Esophagus muscularis mucosa (tissue), 4 donors: ENCODE measurements at regions of chr10 and their contacts with region 1.

Region 1: GRCh38 chr10:28179006-28179742 is 123.7 kb downstream of the MPP7 start:
- DNase-seq: no peak
- H3K4me3 ChIP-seq: peak overlapping the region in 2 of 4 donors; percentile 31 to 41
- H3K27ac ChIP-seq: peak overlapping the region in 3 of 4 donors; percentile 61 to 70 (median 68)
- H3K4me1 ChIP-seq: peaks cover 2 to 44% (median 37%) of the 10 kb centered on the region in 4 donors
- H3K27me3 ChIP-seq: no peaks in the 10 kb centered on the region
- CTCF ChIP-seq: peak; percentile 63 to 80 (median 74)
- EP300 ChIP-seq: no peak
- POLR2A ChIP-seq: no peak

Region 2: GRCh38 chr10:27558612-27559020 is 620.6 kb before region 1 on chr10:
- intact Hi-C with region 1: loop called (anchors 10 kb)
- DNase-seq: no peak
- H3K4me3 ChIP-seq: no peak overlapping the region
- H3K27ac ChIP-seq: no peak overlapping the region
- H3K4me1 ChIP-seq: peaks cover 0 to 6% (median 2%) of the 10 kb centered on the region in 4 donors
- H3K27me3 ChIP-seq: no peaks in the 10 kb centered on the region
- CTCF ChIP-seq: peak; percentile 66 to 79 (median 75)
- EP300 ChIP-seq: no peak
- POLR2A ChIP-seq: no peak

Region 3: GRCh38 chr10:28111712-28112111 is 67.5 kb before region 1 on chr10:
- intact Hi-C with region 1: loop called (anchors 10 kb)
- DNase-seq: no peak
- H3K4me3 ChIP-seq: no peak overlapping the region
- H3K27ac ChIP-seq: no peak overlapping the region
- H3K4me1 ChIP-seq: peaks cover 0 to 12% (median 3%) of the 10 kb centered on the region in 4 donors
- H3K27me3 ChIP-seq: peaks cover 0 to 4% (median 0%) of the 10 kb centered on the region in 4 donors
- CTCF ChIP-seq: no peak
- EP300 ChIP-seq: no peak
- POLR2A ChIP-seq: no peak

Region 4: DNA sequence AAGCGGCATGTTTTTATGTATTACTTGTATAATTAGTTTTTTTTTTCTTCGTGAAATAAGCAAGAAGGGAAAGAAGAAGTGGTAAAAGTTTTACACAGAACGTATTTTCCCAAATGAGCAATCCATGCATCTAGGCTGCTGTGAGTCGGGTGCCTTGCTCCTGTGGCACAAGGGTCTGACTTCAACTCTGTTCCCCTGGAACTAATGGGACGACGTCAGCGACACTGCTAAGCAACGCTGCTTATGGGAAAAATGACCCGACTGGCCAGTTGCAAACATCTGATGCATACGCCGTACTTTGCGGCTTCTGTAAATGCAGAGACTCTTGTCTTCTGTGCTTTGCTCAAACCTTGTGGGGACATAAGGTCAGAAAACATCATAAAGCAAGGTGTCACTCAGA is 57.4 kb after region 1 on chr10:
- intact Hi-C with region 1: loop called (anchors 10 kb)
- DNase-seq: no peak
- H3K4me3 ChIP-seq: no peak overlapping the region
- H3K27ac ChIP-seq: no peak overlapping the region
- H3K4me1 ChIP-seq: peaks cover 0 to 7% (median 6%) of the 10 kb centered on the region in 4 donors
- H3K27me3 ChIP-seq: no peaks in the 10 kb centered on the region
- CTCF ChIP-seq: no peak
- EP300 ChIP-seq: no peak
- POLR2A ChIP-seq: no peak